Ovary (tissue), 10 donors: ENCODE measurements at regions of chr1 and their contacts with region 1.

Region 1: GRCh38 chr1:157490467-157491165 is 61.7 kb downstream of the FCRL5 start:
- DNase-seq: peak in 2 of 5 donors; percentile 23 to 40
- H3K4me3 ChIP-seq: no peak overlapping the region
- H3K27ac ChIP-seq: no peak overlapping the region
- H3K4me1 ChIP-seq: no peaks in the 10 kb centered on the region
- H3K27me3 ChIP-seq: no peaks in the 10 kb centered on the region
- CTCF ChIP-seq: no peak
- EP300 ChIP-seq: no peak
- POLR2A ChIP-seq: no peak

Region 2: DNA sequence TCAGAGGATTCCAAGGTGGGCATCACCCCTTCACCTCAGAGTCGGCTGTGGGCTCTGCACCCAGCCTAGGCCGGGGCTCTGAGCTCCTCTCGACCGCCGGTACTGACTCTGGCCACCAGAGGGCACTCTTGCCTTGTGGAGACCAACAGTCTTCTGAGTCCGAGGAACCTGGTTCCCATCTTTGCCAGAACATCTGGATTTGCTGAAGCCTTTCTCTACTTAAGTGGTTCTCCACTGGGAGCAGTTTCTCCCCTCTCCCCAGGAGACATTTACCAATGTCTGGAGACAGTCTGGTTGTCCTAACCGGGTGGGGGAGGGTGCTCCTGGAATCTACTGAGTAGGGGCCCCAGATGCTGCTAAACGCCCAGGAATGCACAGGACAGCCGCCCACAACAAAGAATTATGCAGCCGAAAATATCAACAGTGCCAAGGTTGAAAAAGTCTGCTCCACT is 400.4 kb before region 1 on chr1:
- intact Hi-C with region 1: loop called in 1 of 4 experiments (anchors 10 kb)
- DNase-seq: peak; percentile 83 to 94 (median 92)
- H3K4me3 ChIP-seq: no peak overlapping the region
- H3K27ac ChIP-seq: no peak overlapping the region
- H3K4me1 ChIP-seq: no peaks in the 10 kb centered on the region
- H3K27me3 ChIP-seq: no peaks in the 10 kb centered on the region
- CTCF ChIP-seq: peak; percentile 84 to 86 (median 84)
- EP300 ChIP-seq: no peak
- POLR2A ChIP-seq: no peak

Region 3: DNA sequence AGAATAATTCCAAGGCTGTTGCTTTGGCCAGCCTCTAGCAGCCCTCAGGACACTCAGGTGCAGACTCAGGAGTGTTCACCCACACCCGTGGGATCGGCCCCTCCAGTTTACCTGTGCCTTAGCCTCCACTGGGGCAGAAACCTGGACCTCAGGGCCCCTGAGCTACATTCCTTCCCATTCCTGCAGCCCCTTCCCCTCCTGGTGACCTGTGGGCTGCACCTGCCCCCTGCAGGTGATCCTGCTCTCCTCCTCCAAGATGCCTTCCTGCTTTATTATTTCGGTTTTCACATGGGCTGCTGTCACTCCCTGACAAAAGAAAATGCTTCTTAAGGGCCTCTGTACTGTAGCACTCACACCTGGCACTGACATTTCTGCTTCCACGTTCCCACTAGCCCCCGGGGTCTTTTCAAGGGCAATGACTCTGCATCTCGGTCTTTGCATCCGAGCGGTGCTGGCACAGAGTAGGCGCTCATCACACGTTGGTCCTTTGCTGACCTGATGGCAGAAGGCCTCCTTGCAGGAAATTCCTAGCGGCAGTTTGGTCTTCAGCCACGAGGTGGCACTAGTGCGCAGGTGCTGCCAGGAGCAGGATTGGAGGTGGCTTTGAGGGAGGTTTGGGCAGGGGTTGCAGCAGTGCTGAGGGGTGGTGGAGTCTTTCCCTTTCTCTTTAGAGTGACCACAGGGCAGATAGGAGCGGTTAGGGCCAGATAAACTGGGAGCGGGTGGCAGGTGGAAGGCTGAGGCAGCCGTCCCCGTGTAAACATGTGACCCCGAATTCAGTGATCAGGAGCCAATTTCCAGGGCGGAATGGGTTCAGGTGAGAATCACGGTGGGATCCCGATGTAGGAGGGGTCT is 327.1 kb before region 1 on chr1:
- intact Hi-C with region 1: loop called in 1 of 4 experiments (anchors 10 kb)
- DNase-seq: peak; percentile 36 to 76 (median 65)
- H3K4me3 ChIP-seq: no peak overlapping the region
- H3K27ac ChIP-seq: no peak overlapping the region
- H3K4me1 ChIP-seq: no peaks in the 10 kb centered on the region
- H3K27me3 ChIP-seq: no peaks in the 10 kb centered on the region
- CTCF ChIP-seq: peak; percentile 19 to 85 (median 54)
- EP300 ChIP-seq: no peak
- POLR2A ChIP-seq: no peak

Region 4: DNA sequence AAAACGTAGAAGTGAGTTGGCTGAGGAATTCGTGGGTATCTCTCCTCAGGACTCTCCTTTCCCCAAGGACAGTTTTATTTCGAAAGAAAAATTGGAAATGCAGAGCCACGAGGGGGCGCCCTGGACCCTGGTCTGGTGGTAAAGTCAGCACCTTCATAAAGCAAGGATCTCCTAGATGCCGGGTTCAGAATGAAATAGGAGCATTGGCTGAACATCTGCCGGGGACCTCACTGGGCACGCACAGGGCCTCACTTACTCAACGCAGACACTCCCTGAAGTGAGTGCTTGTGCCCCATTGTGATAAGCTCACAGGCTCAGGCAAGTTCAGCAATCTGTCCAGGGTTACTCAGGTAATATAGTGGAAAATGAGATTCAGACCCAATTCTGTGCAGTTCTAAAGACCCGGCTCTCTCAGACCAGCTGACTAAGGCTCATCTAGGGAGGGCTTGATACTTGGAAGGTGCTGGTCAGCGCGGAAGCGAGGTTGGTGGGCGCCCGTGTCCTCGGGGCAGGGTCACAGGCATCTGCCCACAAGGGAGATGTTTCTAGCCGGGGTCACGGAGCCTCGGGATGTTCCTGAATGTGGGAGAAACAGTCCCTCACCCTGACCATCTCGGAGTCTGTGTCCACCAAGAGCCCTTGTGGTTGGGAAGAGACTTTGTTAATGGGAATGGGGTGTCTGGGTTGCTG is 296.8 kb before region 1 on chr1:
- intact Hi-C with region 1: loop called in 1 of 4 experiments (anchors 10 kb)
- DNase-seq: peak in 1 of 5 donors; percentile 48
- H3K4me3 ChIP-seq: no peak overlapping the region
- H3K27ac ChIP-seq: no peak overlapping the region
- H3K4me1 ChIP-seq: no peaks in the 10 kb centered on the region
- H3K27me3 ChIP-seq: no peaks in the 10 kb centered on the region
- CTCF ChIP-seq: no peak
- EP300 ChIP-seq: no peak
- POLR2A ChIP-seq: no peak

Region 5: GRCh38 chr1:157369808-157370521 is 120.7 kb before region 1 on chr1:
- intact Hi-C with region 1: loop called in 1 of 4 experiments (anchors 10 kb)
- DNase-seq: no peak
- H3K4me3 ChIP-seq: no peak overlapping the region
- H3K27ac ChIP-seq: no peak overlapping the region
- H3K4me1 ChIP-seq: no peaks in the 10 kb centered on the region
- H3K27me3 ChIP-seq: no peaks in the 10 kb centered on the region
- CTCF ChIP-seq: peak in 1 of 3 donors; percentile 18
- EP300 ChIP-seq: no peak
- POLR2A ChIP-seq: no peak

Region 6: GRCh38 chr1:157403203-157403602 is 87.4 kb before region 1 on chr1:
- intact Hi-C with region 1: no loop called
- DNase-seq: no peak
- H3K4me3 ChIP-seq: no peak overlapping the region
- H3K27ac ChIP-seq: no peak overlapping the region
- H3K4me1 ChIP-seq: no peaks in the 10 kb centered on the region
- H3K27me3 ChIP-seq: no peaks in the 10 kb centered on the region
- CTCF ChIP-seq: no peak
- EP300 ChIP-seq: no peak
- POLR2A ChIP-seq: no peak